MCF 10A (cell line): ENCODE measurements at regions of chr16 and their contacts with region 1.

Region 1: DNA sequence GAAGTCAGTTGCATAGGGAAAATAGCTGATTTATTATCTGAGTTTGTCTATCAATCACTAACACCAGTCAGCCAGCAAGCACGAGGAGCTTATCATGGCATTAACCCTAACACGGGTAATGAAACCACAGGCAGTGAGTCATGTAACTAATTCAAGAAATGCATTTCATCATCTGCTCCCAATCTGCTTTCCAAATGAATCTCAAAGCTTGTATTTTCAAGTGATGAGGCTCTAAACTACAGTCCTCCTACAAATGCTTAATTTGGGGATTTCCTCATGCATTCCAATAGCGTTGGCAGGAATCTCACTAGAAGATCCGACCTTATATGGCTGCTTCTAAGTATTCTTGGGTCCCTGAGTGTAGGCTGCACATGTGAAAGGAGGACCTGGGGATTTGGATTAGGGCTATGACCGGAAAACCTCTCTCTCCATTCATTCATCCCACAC is 118.4 kb upstream of the HSBP1 start:
- DNase-seq: peak; percentile 89
- H3K4me3 Mint-ChIP-seq: no peak overlapping the region
- H3K27ac Mint-ChIP-seq: peak overlapping the region; percentile 34
- H3K4me1 Mint-ChIP-seq: peaks cover 20% of the 10 kb centered on the region
- H3K27me3 Mint-ChIP-seq: no peaks in the 10 kb centered on the region
- CTCF ChIP-seq: no peak

Region 2: DNA sequence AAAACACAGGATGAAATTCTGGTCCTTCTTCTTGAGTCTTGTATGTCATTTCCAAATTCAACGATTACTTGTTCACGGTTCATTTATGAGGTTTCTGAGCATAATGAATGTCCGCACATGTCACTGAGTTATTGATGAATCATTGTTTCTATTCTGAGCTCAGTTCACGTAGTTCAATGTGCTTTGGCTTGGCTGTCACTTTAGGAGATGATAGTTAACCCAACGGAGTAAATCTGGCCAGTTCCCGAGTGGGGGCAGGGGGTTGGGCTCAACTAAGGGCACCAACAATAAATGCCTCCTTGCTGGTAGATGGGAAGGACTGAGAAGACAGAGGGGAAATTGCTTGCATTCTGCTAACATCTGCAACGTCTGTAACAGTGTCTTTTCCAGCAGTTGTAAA is 121.1 kb before region 1 on chr16:
- CTCF ChIA-PET with region 1: no interaction called
- POLR2A ChIA-PET with region 1: no interaction called
- intact Hi-C with region 1: no loop called
- DNase-seq: no peak
- H3K4me3 Mint-ChIP-seq: no peak overlapping the region
- H3K27ac Mint-ChIP-seq: no peak overlapping the region
- H3K4me1 Mint-ChIP-seq: no peaks in the 10 kb centered on the region
- H3K27me3 Mint-ChIP-seq: no peaks in the 10 kb centered on the region
- CTCF ChIP-seq: no peak

Region 3: GRCh38 chr16:83807710-83808572 is 118.5 kb after region 1 on chr16 and contains the start of gene HSBP1:
- CTCF ChIA-PET with region 1: no interaction called
- POLR2A ChIA-PET with region 1: interaction called, 5 read pairs
- intact Hi-C with region 1: loop called (anchors 5 kb)
- DNase-seq: peak; percentile 92
- H3K4me3 Mint-ChIP-seq: peak within 1 kb of the TSS; percentile 95
- H3K27ac Mint-ChIP-seq: peak within 1 kb of the TSS; percentile 91
- H3K4me1 Mint-ChIP-seq: peaks cover 2% of the 10 kb centered on the region
- H3K27me3 Mint-ChIP-seq: no peaks in the 10 kb centered on the region
- CTCF ChIP-seq: no peak
- total RNA-seq, gene HSBP1: 101 and 138 TPM in 2 replicates